ENCODE measurements at regions of chr1 and their contacts with region 1.

Region 1: DNA sequence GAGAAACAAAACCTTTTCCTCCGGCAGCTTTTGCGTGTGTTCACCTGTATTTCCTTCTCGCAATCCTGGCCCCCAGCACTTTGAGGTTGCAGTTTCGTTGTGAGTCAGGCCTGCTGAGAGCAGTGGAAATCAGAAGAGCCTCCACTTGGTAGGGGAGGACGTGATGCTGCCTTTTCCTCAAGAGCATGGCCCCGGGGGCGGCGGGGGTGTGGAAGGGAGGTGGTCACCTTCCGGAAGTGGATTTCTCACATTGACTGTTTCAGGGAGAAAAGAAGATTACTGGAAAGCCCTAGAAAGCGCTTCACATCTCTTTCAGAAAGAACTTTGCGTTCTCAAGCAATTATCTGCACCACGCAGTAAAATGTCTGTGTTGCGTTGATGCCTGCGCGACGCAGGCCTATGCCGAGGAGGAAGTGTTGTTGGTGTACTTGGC is 12.2 kb upstream of the IL10 start:
- DNase-seq: peak in 8 of 9 donors; percentile 34 to 90 (median 62)
- ATAC-seq: peak; percentile 87
- H3K4me3 ChIP-seq: no peak overlapping the region
- H3K4me3 Mint-ChIP-seq: peak overlapping the region in 9 of 10 donors; percentile 63 to 84 (median 70)
- H3K27ac ChIP-seq: peak overlapping the region; percentile 24
- H3K27ac Mint-ChIP-seq: peak overlapping the region; percentile 77 to 95 (median 90)
- H3K4me1 ChIP-seq: peaks cover 44 to 52% of the 10 kb centered on the region in 2 donors
- H3K4me1 Mint-ChIP-seq: peaks cover 40 to 67% (median 62%) of the 10 kb centered on the region in 7 donors
- H3K27me3 ChIP-seq: no peaks in the 10 kb centered on the region
- H3K27me3 Mint-ChIP-seq: peaks cover 0 to 42% (median 0%) of the 10 kb centered on the region in 5 donors

Region 2: GRCh38 chr1:206761159-206761768 is 23.2 kb before region 1 on chr1:
- CTCF ChIA-PET with region 1: interaction called, 3 read pairs
- POLR2A ChIA-PET with region 1: interaction called, 103 read pairs
- intact Hi-C with region 1: loop called in 1 of 2 experiments (anchors 1 kb)
- DNase-seq: no peak
- ATAC-seq: no peak
- H3K4me3 ChIP-seq: no peak overlapping the region
- H3K4me3 Mint-ChIP-seq: peak overlapping the region in 1 of 10 donors; percentile 30
- H3K27ac ChIP-seq: no peak overlapping the region
- H3K27ac Mint-ChIP-seq: peak overlapping the region in 2 of 9 donors; percentile 29 to 47
- H3K4me1 ChIP-seq: peaks cover 45 to 52% of the 10 kb centered on the region in 2 donors
- H3K4me1 Mint-ChIP-seq: peaks cover 19 to 50% (median 42%) of the 10 kb centered on the region in 7 donors
- H3K27me3 ChIP-seq: no peaks in the 10 kb centered on the region
- H3K27me3 Mint-ChIP-seq: peaks cover 0 to 42% (median 0%) of the 10 kb centered on the region in 5 donors

Region 3: DNA sequence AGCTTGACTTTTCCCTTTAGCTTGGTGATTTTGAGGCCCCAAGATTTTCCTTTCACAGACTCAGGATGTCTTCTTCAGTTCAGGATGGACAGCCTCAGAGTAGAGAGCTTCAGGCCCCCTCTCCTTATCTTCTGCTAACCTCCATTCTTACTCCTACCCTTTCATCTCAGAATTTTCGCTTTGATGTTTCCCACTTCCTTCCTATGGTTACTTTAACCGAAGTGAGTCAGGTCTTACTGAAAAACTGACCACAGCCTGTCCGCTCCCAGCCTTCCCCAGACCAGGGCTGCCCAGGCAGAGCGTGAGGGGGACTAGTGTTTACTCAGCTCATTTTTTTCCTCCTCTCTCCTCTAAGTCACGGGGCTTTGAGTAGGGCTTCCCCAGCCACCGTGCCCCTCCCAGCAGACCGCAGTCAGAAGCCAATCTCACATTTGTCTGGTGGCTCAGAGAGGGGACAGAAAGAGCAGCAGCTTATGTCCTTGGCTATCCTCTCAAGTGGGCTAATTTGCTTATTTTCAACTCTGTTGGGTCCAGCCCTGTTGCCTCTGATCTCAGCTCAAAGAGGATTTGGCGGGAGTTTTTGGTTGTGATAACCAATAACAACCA is 18.1 kb before region 1 on chr1:
- CTCF ChIA-PET with region 1: no interaction called
- POLR2A ChIA-PET with region 1: interaction called, 103 read pairs
- intact Hi-C with region 1: loop called (anchors 1 kb)
- DNase-seq: peak; percentile 43 to 76 (median 71)
- ATAC-seq: peak; percentile 91
- H3K4me3 ChIP-seq: peak overlapping the region; percentile 0
- H3K4me3 Mint-ChIP-seq: peak overlapping the region; percentile 52 to 85 (median 80)
- H3K27ac ChIP-seq: no peak overlapping the region
- H3K27ac Mint-ChIP-seq: peak overlapping the region; percentile 66 to 95 (median 76)
- H3K4me1 ChIP-seq: peaks cover 54 to 65% of the 10 kb centered on the region in 2 donors
- H3K4me1 Mint-ChIP-seq: peaks cover 48 to 80% (median 70%) of the 10 kb centered on the region in 7 donors
- H3K27me3 ChIP-seq: no peaks in the 10 kb centered on the region
- H3K27me3 Mint-ChIP-seq: peaks cover 0 to 44% (median 0%) of the 10 kb centered on the region in 5 donors

Region 4: DNA sequence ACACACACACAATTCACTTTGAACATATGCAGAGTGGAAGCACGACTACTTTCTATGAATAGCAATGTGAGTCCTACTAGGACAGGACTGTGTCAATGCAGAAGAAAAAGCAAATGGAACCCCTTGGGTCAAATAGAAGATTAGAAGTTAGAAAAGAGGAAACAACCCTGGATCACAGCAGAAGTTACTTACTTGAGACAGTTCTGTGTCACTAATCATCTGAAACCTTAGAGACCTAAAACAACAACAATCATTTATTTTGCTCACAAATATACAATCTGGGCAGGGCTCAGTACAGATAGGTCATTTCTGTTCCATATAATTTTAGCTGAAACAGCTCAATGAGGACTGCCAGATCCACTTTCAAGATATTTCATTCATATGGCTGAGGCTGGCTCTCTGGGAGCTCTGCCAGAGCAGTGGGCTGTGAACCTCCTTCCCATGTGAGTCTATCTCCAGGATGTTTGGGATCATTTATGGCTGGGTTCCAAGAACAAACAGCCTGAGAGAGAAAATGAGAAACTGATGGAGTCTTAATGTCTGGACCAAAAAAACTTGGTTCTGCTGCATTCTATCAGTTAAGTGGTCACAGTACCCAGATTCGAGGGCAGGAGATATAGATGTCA is 30.3 kb after region 1 on chr1:
- CTCF ChIA-PET with region 1: interaction called, 3 read pairs
- POLR2A ChIA-PET with region 1: interaction called, 3 read pairs
- intact Hi-C with region 1: loop called in 1 of 2 experiments (anchors 1 kb)
- DNase-seq: no peak
- ATAC-seq: peak; percentile 38
- H3K4me3 ChIP-seq: no peak overlapping the region
- H3K4me3 Mint-ChIP-seq: no peak overlapping the region
- H3K27ac ChIP-seq: no peak overlapping the region
- H3K27ac Mint-ChIP-seq: peak overlapping the region in 7 of 9 donors; percentile 8 to 97 (median 41)
- H3K4me1 ChIP-seq: peaks cover 0 to 14% of the 10 kb centered on the region in 2 donors
- H3K4me1 Mint-ChIP-seq: peaks cover 20 to 53% (median 44%) of the 10 kb centered on the region in 7 donors
- H3K27me3 ChIP-seq: no peaks in the 10 kb centered on the region
- H3K27me3 Mint-ChIP-seq: no peaks in the 10 kb centered on the region

Region 5: GRCh38 chr1:206833106-206833680 is 48.7 kb after region 1 on chr1:
- CTCF ChIA-PET with region 1: no interaction called
- POLR2A ChIA-PET with region 1: no interaction called
- intact Hi-C with region 1: loop called in 1 of 2 experiments (anchors 1 kb)
- DNase-seq: no peak
- ATAC-seq: no peak
- H3K4me3 ChIP-seq: no peak overlapping the region
- H3K4me3 Mint-ChIP-seq: no peak overlapping the region
- H3K27ac ChIP-seq: no peak overlapping the region
- H3K27ac Mint-ChIP-seq: no peak overlapping the region
- H3K4me1 ChIP-seq: peaks cover 18 to 22% of the 10 kb centered on the region in 2 donors
- H3K4me1 Mint-ChIP-seq: peaks cover 24 to 51% (median 39%) of the 10 kb centered on the region in 7 donors
- H3K27me3 ChIP-seq: no peaks in the 10 kb centered on the region
- H3K27me3 Mint-ChIP-seq: peaks cover 0 to 51% (median 5%) of the 10 kb centered on the region in 5 donors

Region 6: DNA sequence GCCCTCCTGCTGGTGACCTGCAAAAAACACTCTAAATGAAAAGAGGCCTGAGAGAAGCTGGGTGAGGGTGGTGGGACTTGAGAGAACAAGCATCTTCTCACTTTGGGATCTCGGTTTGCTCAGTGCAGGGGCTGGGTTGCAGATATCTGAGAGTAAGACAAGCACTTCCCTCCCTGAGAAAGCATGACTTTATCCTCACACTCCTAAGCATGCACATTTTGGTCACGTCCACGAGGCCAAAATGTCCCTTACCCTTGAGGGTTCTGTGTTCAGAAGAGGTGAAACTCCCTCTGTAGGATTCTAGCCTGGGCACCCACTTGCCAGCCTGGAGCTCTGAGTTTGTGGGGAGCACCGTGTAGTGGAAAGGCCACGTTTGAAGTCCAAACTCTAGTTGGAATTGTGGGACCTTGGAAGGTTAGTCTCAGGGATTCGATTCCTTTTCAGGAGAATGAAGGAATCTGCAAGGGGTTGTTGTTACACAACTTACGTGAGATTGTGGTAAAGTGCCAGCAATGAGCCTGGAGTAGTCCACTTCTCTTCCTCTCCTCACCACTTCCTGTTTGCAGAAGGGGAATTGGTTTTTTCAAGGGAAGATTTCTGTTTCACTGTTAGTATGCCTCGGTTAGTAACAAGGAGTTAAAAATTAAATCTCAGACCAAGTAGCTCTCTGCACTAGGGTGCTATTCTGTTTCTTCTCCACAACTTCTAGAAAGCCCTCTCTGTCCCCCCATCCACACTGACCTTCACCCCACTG is 182.8 kb after region 1 on chr1:
- CTCF ChIA-PET with region 1: no interaction called
- POLR2A ChIA-PET with region 1: no interaction called
- intact Hi-C with region 1: no loop called
- DNase-seq: peak in 2 of 9 donors; percentile 6 to 16
- ATAC-seq: peak; percentile 67
- H3K4me3 ChIP-seq: no peak overlapping the region
- H3K4me3 Mint-ChIP-seq: peak overlapping the region; percentile 54 to 82 (median 72)
- H3K27ac ChIP-seq: no peak overlapping the region
- H3K27ac Mint-ChIP-seq: peak overlapping the region; percentile 46 to 90 (median 71)
- H3K4me1 ChIP-seq: peaks cover 1 to 25% of the 10 kb centered on the region in 2 donors
- H3K4me1 Mint-ChIP-seq: peaks cover 29 to 57% (median 38%) of the 10 kb centered on the region in 7 donors
- H3K27me3 ChIP-seq: no peaks in the 10 kb centered on the region
- H3K27me3 Mint-ChIP-seq: peaks cover 0 to 31% (median 0%) of the 10 kb centered on the region in 5 donors